Right cardiac atrium (tissue), 5 donors: ENCODE measurements at regions of chr16 and their contacts with region 1.

Region 1: DNA sequence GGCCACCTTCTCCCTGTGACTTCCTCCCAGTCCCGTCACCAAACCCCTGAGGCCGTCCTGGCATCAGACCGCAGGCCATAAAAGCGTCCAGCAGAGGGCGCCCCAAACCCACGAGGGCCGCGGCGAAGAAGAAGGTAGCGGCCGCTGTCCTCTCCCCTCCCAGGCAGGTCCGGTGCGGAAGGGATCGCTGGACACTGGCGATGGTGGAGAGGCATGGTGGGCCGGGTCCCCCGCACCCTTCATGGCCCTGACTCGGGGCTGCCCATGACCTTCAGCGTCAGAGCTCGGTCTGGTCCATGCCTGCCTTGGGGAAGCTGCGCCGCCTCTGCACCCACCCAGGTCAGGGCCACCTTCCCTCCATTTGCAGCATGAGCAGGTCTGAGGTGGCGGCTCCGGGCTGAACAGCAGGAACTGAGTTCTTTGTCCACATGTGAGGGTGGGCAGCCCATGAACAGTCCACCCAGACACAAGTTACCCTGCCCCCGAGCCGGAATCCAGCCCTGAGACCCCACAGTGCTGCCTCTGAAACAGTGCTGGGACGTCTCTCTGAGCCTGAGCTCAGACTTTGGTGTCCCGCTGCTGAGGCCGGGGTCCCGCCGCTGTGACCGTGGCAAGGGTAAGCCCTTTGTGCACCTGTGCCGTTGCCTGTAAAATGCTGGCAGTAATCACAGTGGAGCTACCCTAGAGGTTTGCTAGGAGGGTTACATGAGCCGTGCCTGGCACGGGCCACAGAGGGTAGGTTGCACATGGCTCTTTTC is 40.8 kb upstream of the CMIP start:
- DNase-seq: peak; percentile 82 to 95 (median 93)
- ATAC-seq: peak; percentile 89 to 92
- H3K4me3 ChIP-seq: no peak overlapping the region
- H3K27ac ChIP-seq: no peak overlapping the region
- H3K4me1 ChIP-seq: no peaks in the 10 kb centered on the region
- H3K27me3 ChIP-seq: no peaks in the 10 kb centered on the region

Region 2: DNA sequence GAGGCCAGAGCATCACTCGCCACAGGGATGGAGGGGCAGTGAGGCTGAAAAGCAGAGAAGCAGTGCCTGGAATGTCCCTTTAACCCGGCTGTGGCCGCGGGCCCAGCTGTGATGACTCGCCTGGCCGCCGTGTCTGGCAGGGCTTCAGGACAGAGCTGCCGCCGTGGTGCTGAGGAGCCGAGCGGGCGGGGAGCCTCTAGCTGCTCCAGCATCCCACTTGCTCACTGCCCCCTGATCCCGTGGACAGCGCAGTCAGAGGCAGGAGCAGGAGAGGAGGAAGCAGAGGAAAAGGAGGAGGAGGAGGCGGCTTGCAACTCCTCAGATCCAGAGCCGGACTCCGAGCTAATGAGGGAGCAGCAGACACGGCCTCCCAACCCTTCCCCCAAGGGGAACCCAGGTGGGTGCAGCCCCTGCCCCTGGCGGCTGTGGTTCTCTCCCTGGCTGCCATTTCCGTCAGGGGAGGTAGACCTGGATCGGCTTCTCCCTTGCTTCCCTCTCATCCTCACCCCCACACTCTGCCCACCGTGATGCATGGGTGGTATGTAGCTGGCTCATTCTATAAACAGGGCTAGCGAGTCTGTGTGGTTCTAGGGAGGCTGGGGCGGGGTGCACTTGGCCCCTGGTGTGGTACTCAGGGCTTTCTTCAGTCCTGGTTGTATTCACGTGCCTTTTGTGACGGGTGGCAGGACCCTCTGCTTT is 206.5 kb after region 1 on chr16:
- intact Hi-C with region 1: loop called in 1 of 4 experiments (anchors 5 kb)
- DNase-seq: peak; percentile 90 to 95 (median 94)
- ATAC-seq: peak; percentile 77 to 82
- H3K4me3 ChIP-seq: no peak overlapping the region
- H3K27ac ChIP-seq: no peak overlapping the region
- H3K4me1 ChIP-seq: peaks cover 23% of the 10 kb centered on the region
- H3K27me3 ChIP-seq: no peaks in the 10 kb centered on the region

Region 3: GRCh38 chr16:81623363-81624102 is 219.7 kb after region 1 on chr16:
- intact Hi-C with region 1: loop called in 1 of 4 experiments (anchors 10 kb)
- DNase-seq: no peak
- ATAC-seq: no peak
- H3K4me3 ChIP-seq: no peak overlapping the region
- H3K27ac ChIP-seq: no peak overlapping the region
- H3K4me1 ChIP-seq: peaks cover 11% of the 10 kb centered on the region
- H3K27me3 ChIP-seq: no peaks in the 10 kb centered on the region

Region 4: GRCh38 chr16:81668243-81669097 is 264.7 kb after region 1 on chr16:
- intact Hi-C with region 1: no loop called
- DNase-seq: peak in 2 of 3 donors; percentile 33 to 61
- ATAC-seq: peak; percentile 6 to 12
- H3K4me3 ChIP-seq: no peak overlapping the region
- H3K27ac ChIP-seq: no peak overlapping the region
- H3K4me1 ChIP-seq: no peaks in the 10 kb centered on the region
- H3K27me3 ChIP-seq: no peaks in the 10 kb centered on the region

Region 5: GRCh38 chr16:81723098-81723723 is 319.4 kb after region 1 on chr16:
- intact Hi-C with region 1: loop called (anchors 1 to 5 kb)
- DNase-seq: no peak
- ATAC-seq: peak; percentile 91 to 94
- H3K4me3 ChIP-seq: no peak overlapping the region
- H3K27ac ChIP-seq: no peak overlapping the region
- H3K4me1 ChIP-seq: peaks cover 4% of the 10 kb centered on the region
- H3K27me3 ChIP-seq: no peaks in the 10 kb centered on the region